Prostate gland (tissue), 2 donors: ENCODE measurements at regions of chr9 and their contacts with region 1.

Region 1: DNA sequence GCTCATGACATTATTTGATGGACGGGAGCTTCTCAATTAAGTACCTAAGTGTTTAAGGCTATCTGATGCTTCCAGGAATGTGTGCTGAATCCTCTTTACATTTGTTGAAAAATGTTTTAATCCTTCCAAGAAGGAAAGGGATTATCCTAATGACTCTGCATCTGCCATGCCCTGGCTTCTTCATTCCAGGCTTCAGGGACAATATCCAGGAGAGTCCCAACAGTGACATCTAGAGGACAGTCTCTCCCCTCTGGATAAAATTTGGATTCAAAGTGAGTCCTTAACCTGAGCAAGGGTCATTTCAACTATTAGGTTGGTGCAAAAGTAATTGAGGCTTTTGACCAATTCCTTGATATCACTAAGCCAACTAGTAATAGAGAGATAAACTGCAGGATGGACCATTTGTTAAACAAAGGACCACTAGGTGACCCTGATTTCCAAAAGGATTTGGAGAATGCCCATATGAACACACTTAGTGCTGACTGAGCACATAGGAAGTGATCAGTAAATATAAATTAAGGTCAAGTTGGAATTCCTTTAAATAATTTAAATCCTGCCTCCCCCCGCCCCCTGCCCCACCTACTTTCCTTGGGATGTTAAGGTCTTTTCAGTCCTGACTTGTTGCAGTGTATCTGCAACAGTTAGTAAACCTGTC is 19.1 kb downstream of the TNFSF8 start:
- DNase-seq: peak; percentile 30
- H3K4me3 ChIP-seq: no peak overlapping the region
- H3K27ac ChIP-seq: no peak overlapping the region
- H3K4me1 ChIP-seq: peaks cover 3% of the 10 kb centered on the region
- H3K27me3 ChIP-seq: no peaks in the 10 kb centered on the region
- CTCF ChIP-seq: peak; percentile 26 to 80 (median 76)
- POLR2A ChIP-seq: no peak

Region 2: DNA sequence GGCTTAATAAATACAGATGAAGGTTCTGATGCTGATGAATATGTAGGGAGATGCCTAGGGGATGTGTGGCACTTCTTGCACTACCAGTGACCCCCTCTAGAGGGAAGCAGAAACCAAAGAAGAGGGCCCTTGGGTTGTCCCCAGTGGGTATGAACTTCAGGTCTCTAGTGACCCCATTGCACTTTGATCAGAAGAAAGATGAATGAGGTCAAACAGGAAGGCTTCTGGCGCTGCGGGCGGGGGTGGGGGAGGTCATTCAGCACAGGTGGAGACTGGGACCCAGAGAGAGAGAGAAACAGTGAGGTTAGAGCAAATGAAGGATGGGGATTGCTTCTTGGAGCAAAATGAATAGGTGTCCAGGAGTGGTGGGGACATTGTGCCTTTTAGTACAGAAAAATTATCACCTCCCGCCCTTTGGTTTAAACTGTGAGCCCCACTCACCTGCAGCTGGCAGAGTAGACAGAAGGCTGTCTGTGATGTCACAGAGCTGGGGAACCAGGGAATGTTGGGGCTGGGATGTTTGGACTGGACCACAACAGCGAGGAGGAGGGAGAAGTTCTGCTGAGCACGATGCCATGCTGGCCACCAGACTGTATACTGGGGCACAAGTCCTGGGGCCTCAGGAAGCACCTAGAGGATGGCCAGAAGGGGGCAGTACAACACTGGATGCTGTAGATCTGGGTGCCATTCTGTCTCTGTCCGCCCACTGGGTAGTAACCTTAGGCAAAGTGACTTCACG is 229.5 kb before region 1 on chr9 and contains the start of gene TEX48:
- intact Hi-C with region 1: loop called (anchors 5 kb)
- DNase-seq: peak; percentile 52
- H3K4me3 ChIP-seq: no peak within 1 kb of the TSS
- H3K27ac ChIP-seq: no peak within 1 kb of the TSS
- H3K4me1 ChIP-seq: no peaks in the 10 kb centered on the region
- H3K27me3 ChIP-seq: no peaks in the 10 kb centered on the region
- CTCF ChIP-seq: peak; percentile 9 to 59 (median 49)
- POLR2A ChIP-seq: no peak
- total RNA-seq, gene TEX48: not detected

Region 3: GRCh38 chr9:114738581-114739316 is 172.5 kb before region 1 on chr9:
- intact Hi-C with region 1: loop called (anchors 5 kb)
- DNase-seq: peak; percentile 66
- H3K4me3 ChIP-seq: no peak overlapping the region
- H3K27ac ChIP-seq: no peak overlapping the region
- H3K4me1 ChIP-seq: no peaks in the 10 kb centered on the region
- H3K27me3 ChIP-seq: no peaks in the 10 kb centered on the region
- CTCF ChIP-seq: peak; percentile 75 to 94 (median 92)
- POLR2A ChIP-seq: no peak

Region 4: GRCh38 chr9:115204904-115205453 is 293.7 kb after region 1 on chr9:
- intact Hi-C with region 1: no loop called
- DNase-seq: no peak
- H3K4me3 ChIP-seq: no peak overlapping the region
- H3K27ac ChIP-seq: no peak overlapping the region
- H3K4me1 ChIP-seq: no peaks in the 10 kb centered on the region
- H3K27me3 ChIP-seq: no peaks in the 10 kb centered on the region
- CTCF ChIP-seq: no peak
- POLR2A ChIP-seq: no peak

Region 5: GRCh38 chr9:115220319-115221005 is 309.2 kb after region 1 on chr9:
- intact Hi-C with region 1: no loop called
- DNase-seq: no peak
- H3K4me3 ChIP-seq: no peak overlapping the region
- H3K27ac ChIP-seq: no peak overlapping the region
- H3K4me1 ChIP-seq: no peaks in the 10 kb centered on the region
- H3K27me3 ChIP-seq: no peaks in the 10 kb centered on the region
- CTCF ChIP-seq: no peak
- POLR2A ChIP-seq: no peak

Region 6: GRCh38 chr9:115524453-115525059 is 613.3 kb after region 1 on chr9:
- intact Hi-C with region 1: loop called (anchors 5 kb)
- DNase-seq: peak; percentile 36
- H3K4me3 ChIP-seq: no peak overlapping the region
- H3K27ac ChIP-seq: no peak overlapping the region
- H3K4me1 ChIP-seq: peaks cover 6% of the 10 kb centered on the region
- H3K27me3 ChIP-seq: no peaks in the 10 kb centered on the region
- CTCF ChIP-seq: peak; percentile 27 to 80 (median 74)
- POLR2A ChIP-seq: no peak